Heart right ventricle (tissue), 16 donors: ENCODE measurements at regions of chr5 and their contacts with region 1.

Region 1: GRCh38 chr5:155728146-155728856 is 598.7 kb upstream of the SGCD start:
- DNase-seq: peak; percentile 47 to 68
- ATAC-seq: peak; percentile 17 to 86 (median 76)
- H3K4me3 ChIP-seq: peak overlapping the region; percentile 39 to 64 (median 56)
- H3K27ac ChIP-seq: peak overlapping the region; percentile 50 to 91 (median 83)
- H3K4me1 ChIP-seq: peaks cover 0 to 40% (median 5%) of the 10 kb centered on the region in 9 donors
- H3K27me3 ChIP-seq: peaks cover 0 to 71% (median 33%) of the 10 kb centered on the region in 7 donors
- CTCF ChIP-seq: peak in 4 of 9 donors; percentile 24 to 43 (median 37)

Region 2: DNA sequence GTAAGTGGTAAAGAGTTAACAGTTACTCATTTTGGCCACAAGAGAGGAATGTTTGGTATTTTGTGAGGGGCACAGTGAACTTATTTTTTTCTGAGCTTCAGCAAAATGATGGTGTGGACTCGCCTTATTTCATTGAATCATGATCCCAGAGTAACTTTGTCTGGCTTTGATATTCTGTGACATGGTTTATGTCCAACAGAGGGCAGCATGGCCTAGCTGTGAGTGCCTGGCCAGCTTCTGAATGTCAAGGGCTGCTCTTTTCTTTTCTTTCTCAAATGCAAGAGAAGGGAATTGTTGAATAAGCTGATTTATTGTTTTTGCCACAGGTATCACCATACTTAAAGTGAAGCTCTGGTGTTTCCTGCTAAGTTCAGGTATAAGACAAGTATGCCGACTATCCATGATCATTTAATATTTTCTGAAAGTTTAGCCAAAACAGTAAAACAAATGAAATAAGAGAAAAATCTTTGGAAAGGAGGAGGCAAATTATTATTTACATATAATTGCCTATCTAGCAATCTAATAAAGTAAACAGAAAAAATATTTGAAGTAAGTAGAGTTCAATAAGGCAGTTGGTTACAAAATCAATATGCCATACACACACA is 755.7 kb before region 1 on chr5:
- intact Hi-C with region 1: loop called in 2 of 10 experiments (anchors 2 to 5 kb)
- DNase-seq: peak in 1 of 2 donors; percentile 24
- ATAC-seq: peak in 5 of 8 donors; percentile 51 to 76 (median 74)
- H3K4me3 ChIP-seq: no peak overlapping the region
- H3K27ac ChIP-seq: no peak overlapping the region
- H3K4me1 ChIP-seq: peaks cover 0 to 12% (median 0%) of the 10 kb centered on the region in 9 donors
- H3K27me3 ChIP-seq: no peaks in the 10 kb centered on the region
- CTCF ChIP-seq: peak; percentile 38 to 74 (median 63)

Region 3: DNA sequence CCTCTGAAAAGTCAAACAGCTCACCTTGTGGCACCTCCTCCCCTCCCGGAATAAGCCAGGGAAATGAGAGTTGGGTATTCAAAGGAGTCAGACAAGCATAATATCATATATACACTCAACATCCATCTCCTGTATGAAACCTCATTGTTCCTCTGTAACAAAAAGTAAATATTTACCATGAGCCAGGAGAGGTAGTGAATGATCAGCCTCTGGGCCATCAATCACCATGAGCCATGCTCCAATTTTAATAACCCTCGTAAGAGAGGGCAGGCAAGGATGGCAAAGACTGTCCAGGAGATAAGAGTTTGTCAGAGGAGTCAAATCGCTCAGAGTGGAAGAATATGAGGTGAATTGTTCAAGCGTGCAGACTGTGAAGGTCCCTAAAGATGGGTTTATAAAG is 334.1 kb before region 1 on chr5:
- intact Hi-C with region 1: loop called in 1 of 10 experiments (anchors 10 kb)
- DNase-seq: no peak
- ATAC-seq: no peak
- H3K4me3 ChIP-seq: no peak overlapping the region
- H3K27ac ChIP-seq: no peak overlapping the region
- H3K4me1 ChIP-seq: no peaks in the 10 kb centered on the region
- H3K27me3 ChIP-seq: no peaks in the 10 kb centered on the region
- CTCF ChIP-seq: no peak

Region 4: DNA sequence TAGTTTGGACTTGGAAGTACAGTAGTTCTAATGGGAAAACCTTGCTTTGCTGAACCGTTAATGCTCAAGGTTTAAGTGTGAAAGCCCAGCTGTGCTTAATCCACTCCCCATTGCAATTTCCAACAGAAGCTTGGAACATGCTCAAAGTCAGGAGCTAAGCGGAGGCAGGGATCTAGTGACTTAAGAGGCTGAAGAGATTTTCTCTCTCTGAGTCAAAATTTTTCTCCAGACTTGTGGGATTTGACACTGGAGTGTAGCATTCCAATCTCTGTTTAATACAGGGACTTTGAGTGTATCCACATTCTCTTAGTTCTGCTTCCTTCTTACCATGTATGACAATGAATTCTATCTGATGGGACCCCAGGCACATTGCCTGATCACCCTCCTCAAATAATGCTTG is 242.9 kb before region 1 on chr5:
- intact Hi-C with region 1: loop called in 3 of 10 experiments (anchors 5 to 10 kb)
- DNase-seq: no peak
- ATAC-seq: no peak
- H3K4me3 ChIP-seq: no peak overlapping the region
- H3K27ac ChIP-seq: peak overlapping the region in 2 of 10 donors; percentile 7 to 20
- H3K4me1 ChIP-seq: peaks cover 0 to 15% (median 0%) of the 10 kb centered on the region in 9 donors
- H3K27me3 ChIP-seq: no peaks in the 10 kb centered on the region
- CTCF ChIP-seq: no peak

Region 5: GRCh38 chr5:155954701-155955445 is 226.6 kb after region 1 on chr5:
- intact Hi-C with region 1: loop called in 1 of 10 experiments (anchors 10 kb)
- DNase-seq: no peak
- ATAC-seq: no peak
- H3K4me3 ChIP-seq: no peak overlapping the region
- H3K27ac ChIP-seq: no peak overlapping the region
- H3K4me1 ChIP-seq: peaks cover 0 to 39% (median 9%) of the 10 kb centered on the region in 9 donors
- H3K27me3 ChIP-seq: no peaks in the 10 kb centered on the region
- CTCF ChIP-seq: no peak

Region 6: GRCh38 chr5:156174225-156174624 is 445.9 kb after region 1 on chr5:
- intact Hi-C with region 1: no loop called
- DNase-seq: no peak
- ATAC-seq: peak in 1 of 8 donors; percentile 39
- H3K4me3 ChIP-seq: no peak overlapping the region
- H3K27ac ChIP-seq: peak overlapping the region in 2 of 10 donors; percentile 6 to 11
- H3K4me1 ChIP-seq: peaks cover 0 to 14% (median 0%) of the 10 kb centered on the region in 9 donors
- H3K27me3 ChIP-seq: no peaks in the 10 kb centered on the region
- CTCF ChIP-seq: no peak